Activated CD8-positive, alpha-beta memory T cell treated with anti-CD3 and anti-CD28 coated beads, Interleukin-2, amount 10 ng/mL, durations not matched to agents 7 days and 5 days (primary cell): ENCODE measurements at regions of chr15 and their contacts with region 1.

Region 1: DNA sequence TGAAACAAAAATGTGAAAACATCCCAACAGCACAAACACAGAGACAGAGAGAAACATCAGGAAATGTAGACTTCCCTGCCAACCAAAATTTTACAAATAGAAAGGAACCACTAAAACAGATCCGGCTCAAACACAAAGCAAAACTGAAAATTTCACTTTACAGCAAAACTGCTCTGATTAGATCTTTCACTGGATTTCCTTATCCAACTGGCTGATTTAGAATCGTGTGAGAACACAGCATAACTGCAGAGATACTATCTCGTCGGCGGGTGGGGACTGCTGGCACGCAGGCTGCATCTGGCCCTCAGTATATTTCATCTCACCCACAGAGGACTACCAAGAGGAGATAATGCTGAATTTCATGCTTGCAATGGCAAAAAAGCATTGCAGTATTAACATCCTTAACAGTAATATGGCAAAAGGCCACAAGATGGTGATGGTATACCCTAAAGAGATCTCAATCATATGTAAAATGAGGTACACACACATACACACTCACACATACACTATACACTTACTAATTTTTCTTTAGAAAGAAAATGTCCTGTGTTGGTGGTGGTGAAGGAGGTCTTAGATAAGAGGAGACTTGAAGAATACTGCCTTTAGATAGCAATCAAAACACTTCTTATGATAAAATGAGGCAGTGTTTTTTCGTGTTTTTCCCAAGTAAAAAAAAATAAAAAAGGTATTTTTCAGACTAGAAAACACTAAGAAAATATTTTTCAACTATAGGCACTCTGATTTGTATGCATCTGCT is 10.6 kb upstream of the LEO1 start:
- DNase-seq: peak; percentile 88
- ATAC-seq: peak; percentile 98
- H3K4me3 Mint-ChIP-seq: peak overlapping the region; percentile 76
- H3K27ac Mint-ChIP-seq: peak overlapping the region; percentile 91
- H3K4me1 Mint-ChIP-seq: peaks cover 16% of the 10 kb centered on the region
- H3K27me3 Mint-ChIP-seq: no peaks in the 10 kb centered on the region

Region 2: DNA sequence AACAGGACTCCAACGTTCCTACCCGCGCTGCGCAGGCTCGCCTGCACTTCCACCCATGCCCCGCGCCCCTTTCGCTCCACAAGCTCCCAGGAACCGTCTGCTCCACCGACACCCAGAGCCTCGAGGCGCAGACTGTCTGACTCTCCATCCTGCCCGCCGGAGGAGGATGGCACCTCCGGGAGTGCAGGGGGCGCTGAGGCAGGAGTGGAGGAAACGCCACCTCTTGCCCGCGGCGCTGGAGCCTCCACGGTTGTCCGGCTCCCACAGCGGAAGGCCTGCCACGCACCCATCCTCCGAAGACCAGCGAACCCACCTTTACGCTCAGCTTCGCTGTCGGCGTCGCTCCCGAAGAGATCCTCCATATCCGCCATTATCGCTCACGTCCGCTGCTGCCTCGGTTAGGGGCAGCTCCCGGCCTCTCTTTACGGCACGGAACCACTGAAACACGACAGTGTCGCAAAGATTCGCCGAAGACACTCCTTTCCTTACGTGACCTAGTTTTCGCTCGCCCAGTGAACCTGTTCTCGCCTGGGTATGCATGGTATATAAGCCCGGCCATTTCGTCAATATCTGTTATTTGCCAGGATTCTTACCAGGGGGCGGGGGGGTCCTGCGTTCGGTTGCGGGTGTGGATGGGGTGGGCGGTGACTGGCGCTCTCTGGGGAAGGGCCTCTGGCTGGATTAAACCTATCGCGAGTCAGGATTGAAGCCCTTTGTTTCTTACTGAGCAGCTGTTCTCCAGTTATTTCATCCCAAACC is 10.6 kb before region 1 on chr15 and contains the start of gene LEO1:
- CTCF ChIA-PET with region 1: interaction called, 10 read pairs
- DNase-seq: peak; percentile 96
- ATAC-seq: peak; percentile 94
- H3K4me3 Mint-ChIP-seq: peak within 1 kb of the TSS; percentile 95
- H3K27ac Mint-ChIP-seq: peak within 1 kb of the TSS; percentile 91
- H3K4me1 Mint-ChIP-seq: peaks cover 29% of the 10 kb centered on the region
- H3K27me3 Mint-ChIP-seq: no peaks in the 10 kb centered on the region
- total RNA-seq, gene LEO1: 33.4 to 34.9 TPM

Region 3: DNA sequence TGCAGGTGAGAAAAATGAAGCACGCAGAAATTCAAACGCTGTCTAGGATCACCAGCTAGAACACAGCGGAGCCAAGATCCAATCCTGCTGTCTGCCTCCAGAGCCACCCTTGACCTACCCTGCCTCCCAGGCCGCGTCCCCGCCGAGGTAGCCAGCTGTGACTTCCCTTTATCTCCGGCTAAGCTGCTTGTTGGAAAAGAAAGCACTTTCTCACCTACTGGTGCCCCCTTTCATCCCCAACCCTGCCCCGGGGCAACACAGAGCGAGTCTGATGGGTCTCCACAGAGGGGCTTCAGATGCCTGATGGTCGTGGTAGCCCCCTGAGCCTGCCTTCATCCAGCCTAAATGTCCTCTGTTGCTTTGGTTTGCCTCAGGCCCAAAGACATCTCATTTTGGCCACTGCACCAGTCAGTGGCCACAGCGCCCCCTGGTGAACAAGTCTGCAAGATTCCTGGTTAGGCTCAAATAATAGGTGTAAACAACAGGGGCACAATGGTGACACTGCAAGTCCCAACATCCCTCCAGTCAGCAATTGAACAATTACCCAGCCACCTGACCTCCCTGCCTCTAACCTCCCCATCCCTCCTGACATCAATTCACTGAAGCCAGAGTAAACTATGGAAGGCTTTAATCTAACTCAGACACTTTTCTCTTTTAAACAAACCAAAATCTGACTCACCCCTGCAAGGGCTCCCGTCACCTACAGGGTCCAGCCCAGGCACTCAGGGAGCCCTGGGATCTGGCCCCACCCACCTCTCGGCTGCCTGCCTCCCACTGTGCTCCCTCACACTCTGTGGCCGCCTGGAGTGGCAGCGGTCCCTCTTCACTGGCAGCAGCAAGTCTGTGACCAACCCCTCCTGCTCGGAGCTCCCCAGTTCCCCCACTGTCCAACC is 157.7 kb after region 1 on chr15:
- CTCF ChIA-PET with region 1: interaction called, 13 read pairs
- DNase-seq: peak; percentile 81
- ATAC-seq: peak; percentile 75
- H3K4me3 Mint-ChIP-seq: no peak overlapping the region
- H3K27ac Mint-ChIP-seq: peak overlapping the region; percentile 29
- H3K4me1 Mint-ChIP-seq: peaks cover 21% of the 10 kb centered on the region
- H3K27me3 Mint-ChIP-seq: no peaks in the 10 kb centered on the region